Panc1 (cell line): ENCODE measurements at regions of chr1 and their contacts with region 1.

Region 1: GRCh38 chr1:74771913-74772515 is 39.1 kb downstream of the TYW3 start:
- DNase-seq: peak; percentile 33
- ATAC-seq: no peak; the same call in 1 of the 2 replicates
- H3K4me3 ChIP-seq: no peak overlapping the region
- H3K27ac ChIP-seq: no peak overlapping the region
- H3K4me1 ChIP-seq: no peaks in the 10 kb centered on the region
- H3K27me3 ChIP-seq: peaks cover 5% of the 10 kb centered on the region
- CTCF ChIP-seq: peak; percentile 72; the same call in 1 of the 2 replicates

Region 2: DNA sequence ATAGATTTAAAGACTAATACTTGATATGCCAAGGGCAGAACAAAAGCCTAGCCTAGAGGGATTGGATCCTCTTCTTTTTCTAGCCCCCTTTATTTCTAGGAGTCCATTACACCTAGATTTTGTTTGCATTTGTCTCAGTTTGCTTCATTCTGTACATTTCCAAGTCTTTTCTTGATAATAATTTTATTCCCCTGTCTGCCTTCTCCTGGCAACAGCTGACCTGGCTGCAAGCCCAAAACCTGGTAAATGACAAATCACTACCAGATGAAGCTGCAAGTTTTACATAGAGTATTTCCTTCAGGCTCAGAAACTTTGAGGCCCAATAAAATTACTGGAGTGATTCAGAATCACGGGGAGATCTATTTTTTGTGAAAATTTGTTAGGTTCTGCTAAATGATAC is 325.6 kb after region 1 on chr1:
- CTCF ChIA-PET with region 1: no interaction called
- POLR2A ChIA-PET with region 1: no interaction called
- in situ Hi-C with region 1: no loop called
- intact Hi-C with region 1: loop called (anchors 10 kb)
- DNase-seq: no peak
- ATAC-seq: no peak
- H3K4me3 ChIP-seq: no peak overlapping the region
- H3K27ac ChIP-seq: no peak overlapping the region
- H3K4me1 ChIP-seq: no peaks in the 10 kb centered on the region
- H3K27me3 ChIP-seq: no peaks in the 10 kb centered on the region
- CTCF ChIP-seq: no peak

Region 3: GRCh38 chr1:75188892-75189291 is 416.9 kb after region 1 on chr1:
- CTCF ChIA-PET with region 1: no interaction called
- POLR2A ChIA-PET with region 1: no interaction called
- in situ Hi-C with region 1: loop called (anchors 25 kb)
- intact Hi-C with region 1: no loop called
- DNase-seq: no peak
- ATAC-seq: no peak
- H3K4me3 ChIP-seq: no peak overlapping the region
- H3K27ac ChIP-seq: no peak overlapping the region
- H3K4me1 ChIP-seq: no peaks in the 10 kb centered on the region
- H3K27me3 ChIP-seq: no peaks in the 10 kb centered on the region
- CTCF ChIP-seq: no peak

Region 4: DNA sequence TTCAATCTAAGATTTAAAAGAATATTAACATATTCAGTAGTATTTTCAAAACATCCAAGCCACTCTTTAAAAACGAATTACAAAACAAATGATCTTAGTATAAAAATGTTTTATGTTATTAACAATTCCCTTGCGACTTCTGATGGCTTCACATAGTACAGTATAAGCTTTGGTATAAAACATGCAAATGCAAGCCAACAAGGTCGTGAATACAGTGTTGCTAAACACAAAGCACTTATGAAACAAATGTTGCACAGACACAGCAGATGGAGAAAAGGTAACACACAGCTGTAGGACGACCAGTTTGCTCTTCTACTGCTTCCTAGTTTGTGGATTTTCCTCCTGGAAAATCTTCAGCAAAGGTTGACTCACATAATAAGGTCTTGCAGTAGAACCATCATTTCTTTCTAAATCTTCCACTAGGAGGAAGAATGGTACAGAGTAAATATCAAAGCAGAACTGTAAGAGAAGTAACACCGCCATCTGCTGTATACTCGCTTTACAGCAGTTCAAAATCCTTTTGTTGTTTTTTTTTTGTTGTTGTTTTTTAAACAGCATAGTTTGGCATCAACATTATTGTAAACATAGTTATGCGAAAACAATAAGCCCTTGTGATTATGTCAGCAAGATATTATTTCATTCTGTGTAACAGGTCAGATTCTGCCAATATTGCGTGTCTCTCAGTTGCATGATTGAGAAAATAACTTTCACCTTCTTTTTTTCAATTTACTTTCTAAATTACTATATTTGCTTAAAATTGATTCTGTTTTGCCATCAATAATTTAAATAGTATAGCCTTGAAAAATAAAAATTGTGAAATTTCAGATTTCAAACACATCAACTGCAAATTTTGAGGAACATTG is 431.6 kb after region 1 on chr1:
- CTCF ChIA-PET with region 1: interaction called, 14 read pairs
- POLR2A ChIA-PET with region 1: no interaction called
- in situ Hi-C with region 1: loop called (anchors 25 kb)
- intact Hi-C with region 1: loop called (anchors 1 kb)
- DNase-seq: peak; percentile 62
- ATAC-seq: peak; percentile 83; the same call in 1 of the 2 replicates
- H3K4me3 ChIP-seq: no peak overlapping the region
- H3K27ac ChIP-seq: no peak overlapping the region
- H3K4me1 ChIP-seq: no peaks in the 10 kb centered on the region
- H3K27me3 ChIP-seq: no peaks in the 10 kb centered on the region
- CTCF ChIP-seq: peak; percentile 77; the same call in 1 of the 2 replicates